ENCODE measurements at regions of chr16 and their contacts with region 1.

Region 1: DNA sequence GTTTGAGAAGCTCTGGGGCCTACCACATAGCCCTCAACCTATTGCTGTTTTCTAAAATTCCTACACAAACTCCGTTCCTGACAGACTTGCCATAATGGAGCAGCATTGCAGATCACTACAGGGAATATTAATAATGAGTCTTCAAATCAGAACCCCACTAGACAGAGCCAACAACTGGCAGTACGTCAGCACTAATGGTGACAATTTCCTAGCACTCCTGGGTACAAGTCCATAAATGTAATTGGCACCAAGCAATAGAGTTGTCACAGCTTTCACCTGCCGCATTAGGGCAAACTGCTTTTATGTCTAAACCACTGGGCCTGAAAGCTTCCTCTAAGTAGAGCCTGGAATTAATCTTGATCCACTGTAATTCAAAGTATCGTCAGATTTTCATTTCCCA is 25.5 kb upstream of the ABAT start:
- DNase-seq: no peak
- H3K4me3 ChIP-seq: no peak overlapping the region
- H3K27ac ChIP-seq: no peak overlapping the region
- H3K4me1 ChIP-seq: no peaks in the 10 kb centered on the region
- H3K27me3 ChIP-seq: no peaks in the 10 kb centered on the region
- CTCF ChIP-seq: no peak

Region 2: GRCh38 chr16:8767176-8767575 is 118.3 kb after region 1 on chr16:
- CTCF ChIA-PET with region 1: interaction called, 10 read pairs
- dilution Hi-C with region 1: no loop called
- in situ Hi-C with region 1: no loop called
- intact Hi-C with region 1: no loop called
- DNase-seq: no peak
- H3K4me3 ChIP-seq: no peak overlapping the region
- H3K27ac ChIP-seq: no peak overlapping the region
- H3K4me1 ChIP-seq: no peaks in the 10 kb centered on the region
- H3K27me3 ChIP-seq: no peaks in the 10 kb centered on the region
- CTCF ChIP-seq: no peak

Region 3: DNA sequence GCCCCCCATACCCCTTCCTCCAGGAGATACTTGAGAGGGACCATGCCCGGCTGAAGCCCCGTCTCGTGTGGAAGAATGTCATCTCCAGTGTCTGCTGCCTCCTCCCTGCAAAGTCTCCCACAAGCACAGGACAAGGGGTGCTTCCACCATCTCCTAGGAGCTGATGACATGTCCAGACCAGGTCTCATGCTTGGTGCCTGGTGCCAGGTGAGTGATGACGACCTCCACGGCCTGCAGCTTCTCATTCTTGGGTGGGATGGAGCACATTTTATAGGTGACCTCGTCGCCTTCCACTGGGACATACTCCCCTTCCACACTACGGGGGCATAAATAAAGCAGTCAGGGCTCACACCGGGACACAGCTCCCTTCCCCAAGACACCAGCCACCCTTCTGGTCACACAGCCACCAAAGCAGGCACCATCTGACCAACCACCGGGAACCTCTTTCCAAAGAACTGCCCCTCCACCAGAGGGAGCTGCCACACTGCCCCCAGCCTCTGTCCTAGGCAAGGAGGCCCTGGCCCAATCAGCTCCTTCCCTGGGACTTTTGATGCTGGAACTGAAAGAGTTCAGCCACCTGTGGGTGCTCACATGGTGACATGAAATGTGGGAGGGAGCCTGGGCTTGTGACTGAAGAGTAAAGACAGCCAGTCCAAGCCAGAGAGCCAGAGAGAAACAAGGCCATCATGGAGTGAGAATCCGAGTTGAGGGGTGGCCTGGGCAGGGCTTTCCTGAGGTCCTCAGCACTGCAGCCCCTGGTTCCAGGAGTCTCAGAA is 206.3 kb after region 1 on chr16:
- CTCF ChIA-PET with region 1: no interaction called
- dilution Hi-C with region 1: no loop called
- in situ Hi-C with region 1: no loop called
- intact Hi-C with region 1: no loop called
- DNase-seq: no peak
- H3K4me3 ChIP-seq: no peak overlapping the region
- H3K27ac ChIP-seq: no peak overlapping the region
- H3K4me1 ChIP-seq: peaks cover 6% of the 10 kb centered on the region
- H3K27me3 ChIP-seq: no peaks in the 10 kb centered on the region
- CTCF ChIP-seq: peak; percentile 11 to 17